ENCODE measurements at regions of chr12 and their contacts with region 1.

Region 1: DNA sequence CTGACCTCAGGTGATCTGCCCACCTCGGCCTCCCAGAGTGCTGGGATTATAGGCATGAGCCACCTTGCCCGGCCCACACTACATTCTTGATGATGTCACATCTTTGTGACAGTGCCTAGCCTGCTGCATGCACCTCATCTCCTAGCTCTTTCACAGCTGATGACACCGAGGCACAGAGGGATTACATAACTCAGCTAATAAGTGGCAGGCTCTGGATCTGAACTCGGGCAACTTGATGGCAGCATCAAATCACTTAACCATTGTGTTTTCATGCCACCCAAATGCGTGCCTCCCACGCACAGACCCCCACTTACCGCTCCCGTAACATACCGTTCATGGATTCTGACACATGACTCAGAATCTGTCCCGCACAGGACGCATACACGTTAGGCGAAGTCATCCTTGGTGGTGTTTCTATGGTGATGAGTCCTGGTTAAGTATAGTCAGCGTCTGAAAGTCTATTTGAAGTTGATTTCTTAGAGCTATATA is 7.4 kb downstream of the TMEM120B start:
- DNase-seq: peak; percentile 67
- H3K4me3 ChIP-seq: no peak overlapping the region
- H3K27ac ChIP-seq: no peak overlapping the region
- H3K4me1 ChIP-seq: peaks cover 4% of the 10 kb centered on the region
- H3K27me3 ChIP-seq: no peaks in the 10 kb centered on the region
- CTCF ChIP-seq: no peak

Region 2: DNA sequence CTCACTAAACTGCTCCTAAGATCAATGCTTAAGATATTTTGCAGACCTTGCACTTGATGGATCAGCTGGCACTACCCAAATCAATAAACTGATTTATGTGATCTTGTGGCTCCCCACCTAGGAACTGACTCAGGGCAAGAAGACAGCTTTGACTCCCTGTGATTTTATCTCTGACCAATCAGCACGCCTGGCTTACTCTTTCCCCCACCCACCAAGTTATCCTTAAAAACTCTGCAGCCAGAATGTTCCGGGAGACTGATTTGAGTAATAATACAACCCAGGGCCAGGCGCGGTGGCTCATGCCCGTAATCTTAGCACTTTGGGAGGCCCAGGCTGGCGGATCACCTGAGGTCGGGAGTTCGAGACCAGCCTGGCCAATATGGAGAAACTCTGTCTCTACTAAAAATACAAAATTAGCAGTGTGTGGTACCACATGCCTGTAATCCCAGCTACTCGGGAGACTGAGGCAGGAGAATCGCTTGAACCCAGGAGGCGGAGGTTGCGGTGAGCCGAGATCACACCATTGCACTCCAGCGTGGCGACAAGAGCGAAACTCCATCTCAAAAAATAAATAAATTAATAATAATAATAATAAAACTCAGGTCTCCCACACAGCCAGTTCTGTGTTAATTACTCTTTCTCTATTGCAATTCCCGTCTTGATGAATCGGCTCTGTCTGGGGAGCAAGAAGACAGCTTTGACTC is 62.5 kb before region 1 on chr12:
- CTCF ChIA-PET with region 1: no interaction called
- dilution Hi-C with region 1: no loop called
- in situ Hi-C with region 1: no loop called
- intact Hi-C with region 1: no loop called
- DNase-seq: no peak
- H3K4me3 ChIP-seq: no peak overlapping the region
- H3K27ac ChIP-seq: no peak overlapping the region
- H3K4me1 ChIP-seq: peaks cover 4% of the 10 kb centered on the region
- H3K27me3 ChIP-seq: no peaks in the 10 kb centered on the region
- CTCF ChIP-seq: no peak

Region 3: DNA sequence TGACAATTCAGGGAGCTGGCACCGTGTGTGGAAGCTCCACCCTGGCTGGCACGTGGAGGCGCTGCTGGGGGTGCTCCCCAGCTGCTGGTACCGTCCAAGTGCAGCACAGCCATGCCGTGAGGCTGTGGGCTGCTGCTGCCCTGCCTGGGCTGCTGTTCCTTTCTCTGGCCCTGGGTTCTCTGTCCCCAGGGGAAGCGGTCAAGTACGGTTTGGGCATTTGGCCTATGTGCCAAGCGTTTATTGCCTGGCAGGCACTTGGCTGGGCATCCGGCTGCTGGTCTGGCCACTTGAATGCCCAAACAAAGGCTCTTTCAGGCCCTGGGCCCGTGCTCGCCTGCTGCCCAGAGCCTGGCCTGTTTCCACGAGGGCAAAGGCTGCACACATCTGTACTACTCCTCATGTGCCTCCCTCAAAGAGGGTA is 33.9 kb after region 1 on chr12:
- CTCF ChIA-PET with region 1: no interaction called
- dilution Hi-C with region 1: loop called (anchors 5 kb)
- in situ Hi-C with region 1: no loop called
- intact Hi-C with region 1: loop called (anchors 5 kb)
- DNase-seq: no peak
- H3K4me3 ChIP-seq: no peak overlapping the region
- H3K27ac ChIP-seq: no peak overlapping the region
- H3K4me1 ChIP-seq: no peaks in the 10 kb centered on the region
- H3K27me3 ChIP-seq: no peaks in the 10 kb centered on the region
- CTCF ChIP-seq: no peak

Region 4: DNA sequence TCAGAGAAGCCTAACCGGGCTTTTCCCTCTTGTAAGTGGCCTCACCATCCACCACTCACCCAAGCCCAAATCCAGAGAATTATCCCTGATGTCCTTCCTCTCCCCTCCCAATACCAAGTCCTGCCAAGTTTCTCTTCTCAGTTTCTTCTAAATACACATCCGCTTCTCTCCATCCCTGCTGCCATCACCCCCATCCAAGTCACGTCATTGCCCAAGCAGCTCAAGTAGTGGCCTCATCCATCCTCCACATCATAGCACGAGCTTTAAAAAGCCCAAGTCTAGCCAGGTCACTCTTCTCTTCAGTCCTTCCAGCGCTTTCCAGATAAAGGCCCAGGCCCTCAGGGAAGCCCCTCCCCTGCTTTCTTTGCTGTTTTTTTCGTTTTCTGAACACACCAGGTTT is 428.7 kb after region 1 on chr12:
- CTCF ChIA-PET with region 1: no interaction called
- dilution Hi-C with region 1: no loop called
- in situ Hi-C with region 1: no loop called
- intact Hi-C with region 1: no loop called
- DNase-seq: no peak
- H3K4me3 ChIP-seq: no peak overlapping the region
- H3K27ac ChIP-seq: no peak overlapping the region
- H3K4me1 ChIP-seq: no peaks in the 10 kb centered on the region
- H3K27me3 ChIP-seq: no peaks in the 10 kb centered on the region
- CTCF ChIP-seq: no peak

Region 5: DNA sequence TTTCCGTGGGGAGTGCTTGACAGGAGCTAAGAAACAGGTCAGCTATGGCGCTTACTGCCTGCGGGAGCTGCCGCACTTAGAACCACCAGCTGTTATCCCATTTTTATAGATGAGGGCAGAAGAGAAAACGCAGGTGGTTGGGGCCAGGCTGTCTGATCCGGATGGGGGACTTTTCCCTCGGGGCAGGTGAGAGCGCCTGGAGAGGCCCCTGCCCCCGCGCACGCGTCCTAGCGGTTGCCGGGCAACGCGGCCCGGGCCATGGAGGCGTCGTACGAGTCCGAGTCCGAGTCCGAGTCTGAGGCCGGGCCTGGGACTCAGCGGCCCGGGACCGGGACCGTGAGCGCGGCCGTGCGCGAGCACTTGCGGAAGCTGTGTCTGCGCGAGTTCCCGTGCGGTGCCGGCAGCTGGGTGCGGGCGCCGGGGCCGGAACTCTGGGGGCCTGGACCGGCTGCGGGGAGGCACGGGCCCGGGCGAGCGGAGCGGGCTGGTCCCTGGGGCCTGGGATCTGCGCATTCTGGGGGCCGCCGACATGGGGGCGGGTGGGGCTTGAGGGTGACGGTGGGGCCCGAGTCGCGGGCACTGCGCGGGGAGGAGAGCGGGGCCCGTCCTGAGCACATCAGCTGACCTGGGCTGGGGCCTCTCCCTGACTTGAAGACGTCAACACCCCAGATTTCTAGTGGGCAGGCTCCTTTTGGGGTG is 463.1 kb after region 1 on chr12 and contains the start of gene LRRC43:
- CTCF ChIA-PET with region 1: no interaction called
- dilution Hi-C with region 1: no loop called
- in situ Hi-C with region 1: no loop called
- intact Hi-C with region 1: no loop called
- DNase-seq: peak; percentile 17
- H3K4me3 ChIP-seq: peak within 1 kb of the TSS in 2 of 3 experiments; percentile 38 to 45
- H3K27ac ChIP-seq: no peak within 1 kb of the TSS
- H3K4me1 ChIP-seq: peaks cover 8% of the 10 kb centered on the region
- H3K27me3 ChIP-seq: no peaks in the 10 kb centered on the region
- CTCF ChIP-seq: no peak
- total RNA-seq, gene LRRC43: 0.50 to 0.66 TPM